Aorta (tissue), 5 donors: ENCODE measurements at regions of chr14 and their contacts with region 1.

Region 1: DNA sequence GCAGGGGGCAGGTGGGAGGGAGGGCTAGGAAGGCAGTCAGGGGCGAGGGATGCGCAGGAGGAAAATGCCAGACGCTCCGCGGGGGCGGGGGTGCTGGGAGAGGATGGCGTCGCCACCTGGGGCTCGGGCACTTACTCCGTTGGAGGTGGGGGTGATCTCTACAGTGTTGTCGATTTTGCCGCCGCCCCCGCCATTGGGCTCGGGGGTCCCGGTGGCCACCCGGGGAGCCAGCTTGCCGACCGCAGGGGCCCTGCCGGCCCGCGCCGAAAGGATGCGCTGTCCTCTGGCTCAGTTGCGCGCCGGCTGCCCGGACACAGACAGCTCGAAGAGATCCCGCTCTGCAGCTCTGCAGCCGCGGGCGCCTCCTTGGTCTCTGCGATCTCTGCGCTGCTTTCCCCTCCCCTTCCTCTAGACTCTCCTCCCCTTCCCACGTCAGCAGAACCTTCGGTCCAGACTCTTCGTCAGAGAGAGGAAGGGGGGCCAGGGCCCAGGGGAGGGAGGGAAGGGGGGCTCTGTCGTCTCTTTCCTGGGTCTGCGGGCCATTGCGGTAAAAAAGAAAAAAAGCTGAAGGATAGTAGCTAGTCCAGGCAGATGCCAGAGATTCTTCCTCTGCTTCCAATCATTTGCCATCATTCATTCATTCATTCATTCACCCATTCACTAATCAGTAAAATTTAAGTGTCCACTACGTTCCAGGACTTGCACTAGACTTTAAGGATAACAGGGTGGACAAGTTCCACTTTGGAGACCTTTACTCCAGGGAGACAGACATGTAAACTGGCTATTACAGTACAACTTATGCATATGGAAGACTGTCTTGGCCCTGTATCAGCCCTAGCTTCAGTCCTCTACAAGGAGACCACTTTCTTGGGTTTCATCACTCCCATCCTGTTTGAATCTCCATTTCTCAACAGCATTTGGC is at the start of gene SLC22A17:
- DNase-seq: peak; percentile 84 to 92
- ATAC-seq: peak; percentile 91
- H3K4me3 ChIP-seq: peak within 1 kb of the TSS; percentile 61 to 63
- H3K27ac ChIP-seq: no peak within 1 kb of the TSS
- H3K4me1 ChIP-seq: no peaks in the 10 kb centered on the region
- H3K27me3 ChIP-seq: no peaks in the 10 kb centered on the region
- total RNA-seq, gene SLC22A17: 25.8 to 47.8 TPM

Region 2: DNA sequence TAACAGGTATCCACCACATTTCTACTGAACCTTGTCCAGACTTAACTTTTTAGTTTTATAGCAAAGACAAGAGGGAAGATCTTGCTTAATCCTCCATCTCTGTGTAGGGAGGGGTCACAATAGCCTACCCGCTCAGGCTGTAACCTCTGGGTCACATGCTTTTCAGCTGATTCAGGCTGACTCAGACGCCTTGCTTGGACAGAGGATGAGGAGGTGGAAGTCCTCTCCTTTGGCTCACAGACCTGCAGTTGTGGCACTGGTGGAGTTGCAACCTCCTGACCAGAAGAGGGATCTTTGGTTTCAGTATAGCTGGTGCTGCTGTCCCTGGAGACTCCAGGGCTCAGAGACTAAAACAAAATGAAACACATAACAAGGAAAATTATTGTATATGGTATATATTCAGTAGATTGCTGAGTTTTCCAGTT is 274.1 kb before region 1 on chr14:
- intact Hi-C with region 1: no loop called
- DNase-seq: peak in 1 of 2 donors; percentile 88
- ATAC-seq: peak; percentile 91
- H3K4me3 ChIP-seq: no peak overlapping the region
- H3K27ac ChIP-seq: no peak overlapping the region
- H3K4me1 ChIP-seq: no peaks in the 10 kb centered on the region
- H3K27me3 ChIP-seq: no peaks in the 10 kb centered on the region

Region 3: DNA sequence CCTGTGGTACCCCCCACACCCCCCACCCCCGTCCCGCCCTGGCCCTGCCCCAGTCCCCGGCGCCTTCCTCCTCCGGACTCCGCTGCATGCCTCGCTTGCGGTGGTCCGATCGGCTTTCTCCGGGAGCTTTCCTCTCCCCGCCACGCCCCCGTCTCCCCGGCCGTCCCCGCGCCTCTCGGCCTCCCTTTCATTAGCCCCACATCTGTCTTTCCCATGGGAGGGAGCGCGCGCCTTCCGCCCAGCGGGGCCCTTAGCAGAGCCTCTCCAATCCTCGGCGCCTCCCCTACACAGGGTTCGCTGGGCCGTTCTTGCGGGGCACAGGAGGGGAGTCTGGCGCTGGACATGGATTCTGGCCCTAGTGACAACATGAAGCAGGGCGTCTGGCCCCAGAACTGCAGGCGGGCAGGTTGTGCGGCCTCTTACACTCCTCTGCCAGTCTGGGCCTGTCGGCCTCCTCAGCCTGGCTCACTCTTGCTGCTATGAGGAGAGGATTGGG is 13.7 kb after region 1 on chr14:
- intact Hi-C with region 1: loop called in 1 of 2 experiments (anchors 1 kb)
- DNase-seq: peak; percentile 85 to 91
- ATAC-seq: peak; percentile 79
- H3K4me3 ChIP-seq: peak overlapping the region; percentile 59 to 72
- H3K27ac ChIP-seq: peak overlapping the region; percentile 48 to 78
- H3K4me1 ChIP-seq: no peaks in the 10 kb centered on the region
- H3K27me3 ChIP-seq: no peaks in the 10 kb centered on the region

Region 4: GRCh38 chr14:23469127-23469905 is 116.5 kb after region 1 on chr14 and contains the start of gene NGDN:
- intact Hi-C with region 1: loop called in 1 of 2 experiments (anchors 10 kb)
- DNase-seq: peak; percentile 95 to 97
- ATAC-seq: peak; percentile 98
- H3K4me3 ChIP-seq: peak within 1 kb of the TSS; percentile 56 to 85
- H3K27ac ChIP-seq: peak within 1 kb of the TSS in 1 of 2 donors; percentile 79
- H3K4me1 ChIP-seq: no peaks in the 10 kb centered on the region
- H3K27me3 ChIP-seq: no peaks in the 10 kb centered on the region
- total RNA-seq, gene NGDN: 30.8 to 34.5 TPM

Region 5: GRCh38 chr14:23483236-23483854 is 130.6 kb after region 1 on chr14:
- intact Hi-C with region 1: no loop called
- DNase-seq: no peak
- ATAC-seq: no peak
- H3K4me3 ChIP-seq: no peak overlapping the region
- H3K27ac ChIP-seq: no peak overlapping the region
- H3K4me1 ChIP-seq: no peaks in the 10 kb centered on the region
- H3K27me3 ChIP-seq: no peaks in the 10 kb centered on the region